Left cardiac atrium (tissue), 4 donors: ENCODE measurements at regions of chr20 and their contacts with region 1.

Region 1: GRCh38 chr20:62136283-62137091 is 6.7 kb downstream of the PSMA7 start:
- DNase-seq: peak; percentile 66
- ATAC-seq: peak; percentile 32 to 34

Region 2: GRCh38 chr20:61530670-61531295 is 605.7 kb before region 1 on chr20:
- intact Hi-C with region 1: no loop called
- DNase-seq: no peak
- ATAC-seq: no peak

Region 3: DNA sequence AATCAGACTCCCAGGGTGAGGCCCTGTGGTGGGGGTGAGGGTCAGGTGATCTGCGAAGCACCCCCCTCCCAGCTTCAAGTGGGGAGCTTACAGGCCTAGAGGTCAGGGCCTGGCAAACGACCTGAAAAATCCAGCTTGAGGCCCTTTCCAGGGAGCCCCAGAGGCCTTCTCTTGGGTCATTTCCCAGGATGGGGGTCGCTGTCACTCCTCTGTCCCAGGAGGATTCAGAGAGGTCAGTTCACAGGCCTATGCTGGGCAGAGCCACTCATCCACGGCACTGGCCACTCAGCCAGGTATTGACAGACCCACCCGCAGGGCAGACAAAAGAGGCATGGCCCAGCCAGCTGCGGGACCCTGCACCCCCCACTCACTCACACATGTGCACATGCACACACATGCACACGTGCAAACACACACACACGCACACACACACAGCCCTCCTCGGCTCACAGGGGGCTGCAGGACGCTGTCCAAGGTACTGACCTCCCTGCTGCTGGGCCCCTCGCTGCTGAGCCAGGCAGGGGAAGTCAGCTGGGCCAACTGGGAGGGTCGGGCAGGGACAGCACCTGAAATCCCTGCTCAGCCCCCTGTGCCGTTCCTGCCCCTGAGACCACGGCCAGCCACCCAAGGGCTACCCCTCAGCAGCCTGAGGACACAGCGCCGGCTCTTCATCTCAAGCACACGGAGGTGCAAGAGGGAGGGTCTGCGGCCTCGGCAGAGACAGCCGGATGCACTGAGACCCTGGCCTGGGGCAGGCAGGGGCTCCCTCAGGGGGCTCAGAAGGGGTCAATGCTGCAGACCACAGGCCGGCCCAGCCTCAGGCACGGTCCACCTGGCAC is 184.6 kb before region 1 on chr20:
- intact Hi-C with region 1: no loop called
- DNase-seq: peak; percentile 18
- ATAC-seq: peak in 1 of 2 donors; percentile 15

Region 4: DNA sequence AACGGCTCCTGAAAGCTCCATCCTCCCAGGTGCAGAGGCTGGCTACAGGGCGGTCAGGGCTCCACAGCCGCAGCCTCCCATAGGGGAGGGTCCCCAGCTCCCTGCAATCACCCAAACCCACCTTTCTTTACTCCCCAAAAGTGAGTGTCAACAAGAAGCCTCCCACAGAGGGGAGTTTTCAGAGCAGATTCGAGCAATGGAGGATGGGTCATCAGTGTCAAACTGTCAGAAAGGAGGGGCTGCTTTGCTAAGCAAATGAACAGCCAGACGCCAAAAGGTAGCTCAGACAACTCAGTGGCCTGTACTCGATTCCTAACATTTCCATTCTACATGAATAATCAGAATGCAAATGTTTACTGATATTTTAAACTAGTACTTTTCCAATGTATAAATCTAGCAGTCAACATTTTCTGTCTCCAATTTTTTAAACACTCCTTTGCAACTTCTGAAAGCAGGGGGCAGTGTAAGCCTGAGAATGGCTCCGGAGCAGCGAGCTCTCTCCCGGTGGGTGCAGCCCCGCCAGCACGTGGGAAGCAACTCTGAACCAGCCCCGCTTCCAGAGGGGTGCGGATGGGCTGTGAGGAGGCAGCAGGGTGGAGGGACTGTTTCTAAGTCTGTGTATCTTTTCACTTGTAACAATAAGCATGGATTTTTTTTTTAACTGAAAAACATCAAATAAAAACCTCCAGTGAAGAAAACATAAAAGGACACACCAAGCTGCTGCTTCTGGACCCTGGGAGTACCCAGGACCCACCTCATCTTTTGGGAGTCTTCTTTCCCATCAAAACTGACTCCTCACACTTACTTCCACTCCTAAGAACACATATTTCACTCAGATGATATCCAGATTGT is 125.7 kb before region 1 on chr20:
- intact Hi-C with region 1: loop called (anchors 5 kb)
- DNase-seq: peak; percentile 64
- ATAC-seq: peak; percentile 72 to 83

Region 5: GRCh38 chr20:62025832-62026563 is 110.5 kb before region 1 on chr20:
- intact Hi-C with region 1: loop called in 1 of 2 experiments (anchors 5 kb)
- DNase-seq: peak; percentile 47
- ATAC-seq: peak; percentile 76 to 83

Region 6: DNA sequence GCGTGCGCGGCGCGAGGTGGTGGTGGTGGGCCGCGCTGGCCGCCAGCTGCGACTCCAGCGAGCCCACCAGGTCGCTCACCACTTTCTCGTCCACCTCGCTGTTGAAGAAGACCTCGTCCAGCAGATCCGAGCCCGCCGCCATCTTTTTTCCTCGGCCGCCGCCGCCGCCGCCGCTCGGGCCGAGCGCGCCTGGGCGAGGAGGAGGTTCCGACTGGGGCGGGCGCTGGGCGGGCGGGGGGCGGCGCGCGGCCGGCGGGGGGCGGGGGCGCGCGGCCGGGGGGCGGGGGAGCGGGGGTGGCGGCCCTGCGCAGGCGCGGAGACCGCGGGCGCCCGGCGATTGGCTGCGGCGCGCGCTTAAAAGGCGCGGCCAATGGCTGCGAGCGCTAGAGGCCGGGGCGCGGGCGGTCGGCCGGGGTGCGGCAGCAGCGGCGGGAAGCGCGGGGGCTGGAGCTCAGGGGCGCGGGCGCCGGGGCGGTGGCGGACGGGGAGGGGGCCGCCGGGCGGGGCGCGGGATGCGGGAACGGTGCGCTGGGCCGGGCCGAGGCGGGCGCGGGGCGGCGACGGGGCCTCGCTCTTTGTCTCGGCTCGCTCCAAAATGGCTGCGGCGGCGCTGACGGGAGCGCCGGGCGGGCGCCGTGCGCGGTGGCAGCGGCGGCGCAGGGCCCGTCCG is 70.7 kb before region 1 on chr20 and contains the start of gene TAF4:
- intact Hi-C with region 1: loop called in 1 of 2 experiments (anchors 5 kb)
- DNase-seq: peak; percentile 76
- ATAC-seq: peak; percentile 62 to 81
- total RNA-seq, gene TAF4: 8.8 to 9.3 TPM

Region 7: GRCh38 chr20:62285722-62286121 is 149.2 kb after region 1 on chr20:
- intact Hi-C with region 1: no loop called
- DNase-seq: peak; percentile 82
- ATAC-seq: peak; percentile 6 to 25